Activated CD8-positive, alpha-beta T cell treated with anti-CD3 and anti-CD28 coated beads for 36 hours (primary cell): ENCODE measurements at regions of chr21 and their contacts with region 1.

Region 1: GRCh38 chr21:33542640-33543504 is at the start of gene SON:
- DNase-seq: peak; percentile 99
- ATAC-seq: peak; percentile 94
- H3K4me3 Mint-ChIP-seq: peak within 1 kb of the TSS; percentile 86
- H3K27ac Mint-ChIP-seq: peak within 1 kb of the TSS; percentile 100
- H3K4me1 Mint-ChIP-seq: peaks cover 36% of the 10 kb centered on the region
- H3K27me3 Mint-ChIP-seq: no peaks in the 10 kb centered on the region
- CTCF ChIP-seq: no peak
- total RNA-seq, gene SON: 267 to 276 TPM

Region 2: GRCh38 chr21:33479679-33480480 is 63.0 kb before region 1 on chr21 and contains the start of gene TMEM50B:
- CTCF ChIA-PET with region 1: interaction called, 3 read pairs
- POLR2A ChIA-PET with region 1: interaction called, 19 read pairs
- intact Hi-C with region 1: loop called (anchors 5 kb)
- DNase-seq: peak; percentile 98
- ATAC-seq: peak; percentile 96
- H3K4me3 Mint-ChIP-seq: peak within 1 kb of the TSS; percentile 92
- H3K27ac Mint-ChIP-seq: peak within 1 kb of the TSS; percentile 94
- H3K4me1 Mint-ChIP-seq: peaks cover 15% of the 10 kb centered on the region
- H3K27me3 Mint-ChIP-seq: no peaks in the 10 kb centered on the region
- CTCF ChIP-seq: no peak
- total RNA-seq, gene TMEM50B: 14.4 to 15.2 TPM

Region 3: GRCh38 chr21:33491373-33492102 is 51.3 kb before region 1 on chr21 and contains the start of gene DNAJC28:
- CTCF ChIA-PET with region 1: no interaction called
- POLR2A ChIA-PET with region 1: interaction called, 3 read pairs
- intact Hi-C with region 1: loop called (anchors 5 kb)
- DNase-seq: peak; percentile 97
- ATAC-seq: peak; percentile 99
- H3K4me3 Mint-ChIP-seq: peak within 1 kb of the TSS; percentile 78
- H3K27ac Mint-ChIP-seq: peak within 1 kb of the TSS; percentile 88
- H3K4me1 Mint-ChIP-seq: peaks cover 10% of the 10 kb centered on the region
- H3K27me3 Mint-ChIP-seq: no peaks in the 10 kb centered on the region
- CTCF ChIP-seq: no peak
- total RNA-seq, gene DNAJC28: 0.22 to 0.56 TPM

Region 4: DNA sequence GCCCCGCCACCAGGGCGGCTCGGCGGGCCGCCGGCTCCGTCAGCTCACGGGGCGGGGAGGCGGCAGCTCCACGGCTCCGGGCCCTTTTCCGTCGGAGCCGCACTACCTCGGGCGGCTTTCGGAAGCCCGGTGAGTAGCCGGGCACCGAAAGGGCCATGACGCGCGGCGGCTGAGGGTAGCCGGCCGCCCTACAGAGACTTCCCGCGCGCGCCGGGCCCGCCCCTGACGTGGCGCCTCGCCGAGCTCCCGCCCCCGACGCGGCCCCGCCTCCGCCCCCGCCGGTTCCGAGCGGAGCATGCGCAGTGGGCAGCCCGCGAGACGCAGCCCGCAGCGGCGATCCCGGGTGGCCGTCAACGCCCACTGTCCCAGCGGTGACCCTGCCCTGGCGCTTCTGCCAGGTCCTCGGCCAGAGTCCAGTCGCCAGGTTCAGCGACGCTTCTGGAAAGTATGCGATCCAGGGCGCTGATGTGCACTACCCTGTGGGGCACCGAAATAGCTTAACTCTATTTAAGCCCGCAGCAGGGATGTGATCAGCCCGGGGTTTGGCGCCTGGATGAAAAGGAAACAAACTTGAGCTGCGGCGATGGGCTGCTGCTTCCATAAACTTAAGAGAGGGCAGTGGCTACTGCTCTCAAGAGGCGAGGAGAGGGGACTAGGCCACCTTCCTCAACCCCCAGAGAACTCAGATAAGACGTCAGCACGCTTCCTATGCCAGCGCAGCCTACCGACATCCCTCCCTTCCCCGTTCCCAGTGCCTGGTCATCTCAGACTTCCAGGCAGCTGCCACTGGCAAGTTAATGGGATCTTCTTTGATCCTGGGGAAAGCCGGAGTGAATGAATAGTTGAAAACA is 45.8 kb after region 1 on chr21 and contains the start of gene DONSON:
- CTCF ChIA-PET with region 1: interaction called, 4 read pairs
- POLR2A ChIA-PET with region 1: interaction called, 24 read pairs
- intact Hi-C with region 1: no loop called
- DNase-seq: peak; percentile 83
- ATAC-seq: peak; percentile 94
- H3K4me3 Mint-ChIP-seq: peak within 1 kb of the TSS; percentile 93
- H3K27ac Mint-ChIP-seq: peak within 1 kb of the TSS; percentile 86
- H3K4me1 Mint-ChIP-seq: peaks cover 15% of the 10 kb centered on the region
- H3K27me3 Mint-ChIP-seq: no peaks in the 10 kb centered on the region
- CTCF ChIP-seq: no peak
- total RNA-seq, gene DONSON: 36.8 to 41.5 TPM

Region 5: GRCh38 chr21:33734291-33734690 is 191.4 kb after region 1 on chr21:
- CTCF ChIA-PET with region 1: no interaction called
- POLR2A ChIA-PET with region 1: no interaction called
- intact Hi-C with region 1: no loop called
- DNase-seq: no peak
- ATAC-seq: no peak
- H3K4me3 Mint-ChIP-seq: no peak overlapping the region
- H3K27ac Mint-ChIP-seq: no peak overlapping the region
- H3K4me1 Mint-ChIP-seq: no peaks in the 10 kb centered on the region
- H3K27me3 Mint-ChIP-seq: no peaks in the 10 kb centered on the region
- CTCF ChIP-seq: no peak

Region 6: DNA sequence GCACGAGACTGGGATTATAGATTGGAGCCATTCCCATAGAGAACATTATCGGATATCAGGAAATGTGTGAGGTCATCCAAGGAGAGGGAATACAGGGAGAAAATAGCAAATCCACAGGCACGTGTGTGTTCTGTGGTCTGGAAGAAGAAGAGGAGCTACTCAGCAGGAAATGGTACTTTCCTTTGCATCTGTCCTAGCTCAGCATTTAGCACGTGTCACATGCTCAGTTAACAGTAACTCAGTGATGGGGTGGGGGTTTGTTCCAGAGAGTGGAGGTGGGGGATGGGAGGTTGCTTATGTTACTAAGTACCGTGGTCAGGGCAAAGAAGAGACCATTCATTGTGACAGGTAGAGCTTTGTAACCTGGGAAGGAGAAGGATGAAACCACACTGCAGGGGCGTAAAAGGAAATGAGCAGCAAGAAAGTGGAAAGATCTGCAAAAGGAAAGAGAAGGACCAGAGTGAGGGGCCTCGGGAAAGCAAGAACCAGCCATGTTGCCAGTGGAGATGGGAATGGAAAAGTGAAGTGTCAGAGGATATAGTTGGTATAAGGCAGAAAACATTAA is 272.4 kb after region 1 on chr21:
- CTCF ChIA-PET with region 1: no interaction called
- POLR2A ChIA-PET with region 1: no interaction called
- intact Hi-C with region 1: no loop called
- DNase-seq: no peak
- ATAC-seq: no peak
- H3K4me3 Mint-ChIP-seq: no peak overlapping the region
- H3K27ac Mint-ChIP-seq: no peak overlapping the region
- H3K4me1 Mint-ChIP-seq: no peaks in the 10 kb centered on the region
- H3K27me3 Mint-ChIP-seq: no peaks in the 10 kb centered on the region
- CTCF ChIP-seq: no peak